ENCODE measurements at regions of chr1 and their contacts with region 1.

Region 1: GRCh38 chr1:6727535-6727934 is 25.9 kb upstream of the DNAJC11 start:
- DNase-seq: peak; percentile 67
- H3K4me3 Mint-ChIP-seq: no peak overlapping the region
- H3K27ac Mint-ChIP-seq: no peak overlapping the region
- H3K4me1 Mint-ChIP-seq: no peaks in the 10 kb centered on the region
- H3K27me3 Mint-ChIP-seq: peaks cover 3% of the 10 kb centered on the region

Region 2: DNA sequence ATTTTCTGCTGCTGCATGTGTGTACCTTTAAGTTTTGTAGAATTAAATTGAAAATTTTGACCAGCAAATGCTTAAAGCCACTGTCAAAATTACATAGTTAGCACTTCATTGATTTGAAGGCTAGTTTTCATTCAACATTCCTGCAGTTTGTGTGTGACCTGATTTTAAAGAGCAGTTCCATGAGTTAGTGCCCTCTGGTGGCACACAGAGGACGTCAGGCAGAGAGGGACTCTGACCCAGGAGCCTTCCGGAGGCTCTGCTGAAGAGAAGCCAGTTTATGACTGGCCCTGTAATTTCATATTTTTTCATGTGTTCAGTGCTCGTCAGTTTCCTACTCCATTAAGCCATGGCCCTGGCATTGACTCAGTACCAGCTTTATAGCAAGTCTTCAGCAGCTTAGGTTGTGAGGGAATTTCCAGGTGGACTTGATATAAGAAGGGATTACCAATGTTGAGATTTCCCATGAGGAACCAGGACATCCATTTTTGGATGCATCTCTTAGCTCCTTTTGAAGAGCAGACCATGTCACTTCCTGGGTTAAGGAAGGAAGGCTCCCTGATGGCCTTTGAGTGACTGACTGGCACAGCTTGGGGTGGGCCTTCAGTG is 162.4 kb after region 1 on chr1:
- CTCF ChIA-PET with region 1: interaction called, 10 read pairs
- POLR2A ChIA-PET with region 1: no interaction called
- intact Hi-C with region 1: no loop called
- DNase-seq: peak; percentile 54
- H3K4me3 Mint-ChIP-seq: no peak overlapping the region
- H3K27ac Mint-ChIP-seq: no peak overlapping the region
- H3K4me1 Mint-ChIP-seq: peaks cover under 1% of the 10 kb centered on the region
- H3K27me3 Mint-ChIP-seq: no peaks in the 10 kb centered on the region

Region 3: GRCh38 chr1:6962996-6963911 is 235.7 kb after region 1 on chr1:
- CTCF ChIA-PET with region 1: interaction called, 3 read pairs
- POLR2A ChIA-PET with region 1: no interaction called
- intact Hi-C with region 1: loop called (anchors 10 kb)
- DNase-seq: peak; percentile 83
- H3K4me3 Mint-ChIP-seq: peak overlapping the region; percentile 55
- H3K27ac Mint-ChIP-seq: no peak overlapping the region
- H3K4me1 Mint-ChIP-seq: peaks cover 12% of the 10 kb centered on the region
- H3K27me3 Mint-ChIP-seq: peaks cover 44% of the 10 kb centered on the region

Region 4: DNA sequence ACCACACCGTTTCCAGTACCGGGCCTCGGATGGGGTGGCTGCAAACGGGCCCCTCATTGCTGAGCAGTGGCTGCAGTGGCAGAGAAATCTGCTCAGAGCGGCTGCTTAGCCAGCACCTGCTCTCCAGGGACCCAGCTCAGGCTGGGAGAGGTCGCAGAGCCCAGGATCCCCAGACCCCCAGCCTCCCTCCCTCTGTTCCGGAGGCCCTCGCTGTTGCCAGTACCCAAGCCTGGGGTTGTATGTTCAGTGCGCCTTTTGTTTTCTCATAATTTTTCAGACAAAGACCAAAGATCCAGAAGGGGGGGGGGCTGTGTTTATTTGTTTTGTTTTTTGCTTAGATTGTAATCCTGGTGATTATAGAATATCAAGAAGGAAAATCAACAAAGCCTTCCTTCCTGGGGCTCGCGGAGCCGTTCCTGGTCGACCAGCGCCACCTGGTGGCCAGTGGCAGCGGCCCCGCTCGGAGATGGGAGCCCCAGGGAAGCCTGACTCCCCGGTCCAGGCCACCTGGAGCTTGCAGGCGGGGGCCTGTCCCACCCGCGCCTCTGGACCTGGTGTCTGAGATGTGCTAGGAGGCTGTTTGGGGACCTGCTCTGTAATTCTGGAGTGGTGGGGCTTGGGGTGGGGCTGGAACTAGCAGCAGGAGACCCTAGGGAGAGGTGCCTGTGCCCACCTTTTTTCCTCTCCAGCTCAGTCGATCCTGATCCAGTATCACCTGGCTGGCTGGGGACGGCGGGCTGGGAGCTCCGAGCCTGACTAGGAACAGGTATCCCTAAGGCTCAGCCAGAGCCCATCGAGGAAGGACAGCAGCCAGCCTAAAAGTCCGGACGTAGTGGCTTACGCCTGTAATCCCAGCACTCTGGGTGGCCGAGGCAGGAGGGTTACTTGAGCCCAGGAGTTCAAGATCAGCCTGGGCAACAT is 919.7 kb after region 1 on chr1:
- CTCF ChIA-PET with region 1: interaction called, 3 read pairs
- POLR2A ChIA-PET with region 1: no interaction called
- intact Hi-C with region 1: loop called (anchors 10 kb)
- DNase-seq: peak; percentile 76
- H3K4me3 Mint-ChIP-seq: no peak overlapping the region
- H3K27ac Mint-ChIP-seq: no peak overlapping the region
- H3K4me1 Mint-ChIP-seq: no peaks in the 10 kb centered on the region
- H3K27me3 Mint-ChIP-seq: peaks cover 1% of the 10 kb centered on the region